ENCODE measurements at regions of chr1 and their contacts with region 1.

Region 1: GRCh38 chr1:202713110-202713509 is 2.9 kb upstream of the SYT2 start:
- DNase-seq: no peak
- ATAC-seq: no peak
- H3K4me3 ChIP-seq: no peak overlapping the region
- H3K4me3 Mint-ChIP-seq: no peak overlapping the region
- H3K27ac ChIP-seq: no peak overlapping the region
- H3K27ac Mint-ChIP-seq: no peak overlapping the region
- H3K4me1 ChIP-seq: peaks cover 9 to 14% of the 10 kb centered on the region in 2 donors
- H3K4me1 Mint-ChIP-seq: peaks cover 8% of the 10 kb centered on the region
- H3K27me3 ChIP-seq: peaks cover 0 to 58% (median 17%) of the 10 kb centered on the region in 4 experiments
- H3K27me3 Mint-ChIP-seq: peaks cover 56% of the 10 kb centered on the region
- CTCF ChIP-seq: no peak

Region 2: GRCh38 chr1:202009326-202010179 is 703.6 kb before region 1 on chr1:
- CTCF ChIA-PET with region 1: no interaction called
- POLR2A ChIA-PET with region 1: no interaction called
- intact Hi-C with region 1: loop called (anchors 5 kb)
- DNase-seq: peak; percentile 67
- ATAC-seq: peak; percentile 60
- H3K4me3 ChIP-seq: no peak overlapping the region
- H3K4me3 Mint-ChIP-seq: no peak overlapping the region
- H3K27ac ChIP-seq: no peak overlapping the region
- H3K27ac Mint-ChIP-seq: no peak overlapping the region
- H3K4me1 ChIP-seq: peaks cover 0 to 7% of the 10 kb centered on the region in 2 donors
- H3K4me1 Mint-ChIP-seq: peaks cover 2% of the 10 kb centered on the region
- H3K27me3 ChIP-seq: no peaks in the 10 kb centered on the region
- H3K27me3 Mint-ChIP-seq: no peaks in the 10 kb centered on the region
- CTCF ChIP-seq: peak; percentile 94

Region 3: DNA sequence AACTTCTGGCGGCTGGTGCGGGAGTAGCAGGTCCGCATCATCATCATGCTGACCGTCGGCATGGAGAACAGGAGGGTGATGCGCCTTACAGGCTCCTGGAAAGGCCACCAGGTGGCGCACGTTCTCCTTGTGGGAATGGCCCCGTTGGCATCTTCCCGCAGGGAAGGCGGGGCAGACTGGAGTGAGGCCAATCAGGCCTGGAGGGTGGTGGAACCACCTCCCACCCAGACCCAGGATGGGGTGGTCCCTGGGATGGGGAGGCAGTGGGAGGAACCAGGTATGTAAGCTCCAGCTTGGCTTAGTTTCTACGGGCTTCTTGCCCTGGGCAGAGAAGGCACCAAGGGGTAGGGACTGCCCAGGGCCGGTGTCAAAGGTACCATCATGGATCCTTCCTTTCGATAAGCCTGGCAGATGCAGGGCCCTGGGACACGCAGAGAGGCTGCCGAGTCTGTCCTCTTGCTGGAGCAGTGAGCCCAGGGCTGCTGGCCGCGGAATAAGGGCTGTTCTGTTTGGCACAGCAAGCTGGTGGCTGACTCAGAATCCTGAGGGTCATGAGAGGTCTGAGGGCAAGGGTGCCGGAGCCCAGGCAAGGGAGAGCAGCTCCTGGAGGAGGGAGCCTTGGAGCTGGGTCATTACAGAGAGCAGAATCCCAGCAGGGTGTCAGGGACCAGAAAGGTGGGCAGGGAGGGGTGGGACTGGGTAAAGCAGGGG is 528.2 kb before region 1 on chr1:
- CTCF ChIA-PET with region 1: interaction called, 41 read pairs
- POLR2A ChIA-PET with region 1: no interaction called
- intact Hi-C with region 1: no loop called
- DNase-seq: peak; percentile 71
- ATAC-seq: peak; percentile 50
- H3K4me3 ChIP-seq: no peak overlapping the region
- H3K4me3 Mint-ChIP-seq: no peak overlapping the region
- H3K27ac ChIP-seq: no peak overlapping the region
- H3K27ac Mint-ChIP-seq: no peak overlapping the region
- H3K4me1 ChIP-seq: peaks cover 5 to 6% of the 10 kb centered on the region in 2 donors
- H3K4me1 Mint-ChIP-seq: peaks cover 9% of the 10 kb centered on the region
- H3K27me3 ChIP-seq: peaks cover 0 to 31% (median 5%) of the 10 kb centered on the region in 4 experiments
- H3K27me3 Mint-ChIP-seq: peaks cover 46% of the 10 kb centered on the region
- CTCF ChIP-seq: peak; percentile 78

Region 4: DNA sequence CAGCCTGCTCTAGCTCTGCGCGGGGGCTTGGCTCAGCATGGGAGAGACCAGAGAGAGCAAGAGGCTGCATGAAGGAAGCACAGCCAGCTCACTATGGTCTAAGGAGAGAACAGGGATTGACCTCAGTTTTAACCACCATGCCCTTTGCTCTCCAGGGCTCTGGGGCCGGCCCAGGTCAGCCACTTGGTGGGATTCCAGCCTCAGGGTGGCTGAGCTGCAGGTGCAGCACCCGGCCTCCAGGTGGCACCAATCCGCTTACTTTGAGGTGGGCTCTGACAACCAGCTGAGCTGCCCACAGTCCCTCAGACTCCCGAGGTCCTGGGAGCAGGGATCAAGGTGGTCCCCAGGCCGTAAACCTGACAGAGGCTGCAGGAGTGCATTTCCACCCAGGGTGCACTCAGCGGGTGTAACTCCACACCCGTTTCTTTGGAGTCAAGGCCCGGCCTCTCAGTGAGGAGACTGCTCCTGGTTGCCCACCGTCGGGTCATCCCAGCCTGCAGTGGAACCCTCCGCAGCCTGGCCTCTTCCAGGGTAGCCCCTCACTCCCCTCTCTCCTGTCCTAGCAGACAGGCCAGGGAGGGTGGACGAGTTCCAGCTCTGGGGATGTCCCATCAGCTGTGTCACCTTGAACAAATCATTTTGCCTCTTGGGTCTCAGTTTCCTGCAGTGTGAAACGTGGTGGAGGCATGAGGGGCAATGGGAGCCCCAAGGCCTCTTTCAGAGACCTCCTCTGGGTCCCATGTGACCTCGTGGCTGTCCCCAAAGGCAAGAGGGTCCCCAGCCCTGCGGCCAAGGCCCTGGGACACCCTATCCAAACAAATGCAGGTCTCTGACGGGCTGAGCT is 520.1 kb before region 1 on chr1:
- CTCF ChIA-PET with region 1: interaction called, 71 read pairs
- POLR2A ChIA-PET with region 1: no interaction called
- intact Hi-C with region 1: no loop called
- DNase-seq: peak; percentile 75
- ATAC-seq: peak; percentile 71
- H3K4me3 ChIP-seq: no peak overlapping the region
- H3K4me3 Mint-ChIP-seq: peak overlapping the region; percentile 58
- H3K27ac ChIP-seq: no peak overlapping the region
- H3K27ac Mint-ChIP-seq: no peak overlapping the region
- H3K4me1 ChIP-seq: peaks cover 14 to 19% of the 10 kb centered on the region in 2 donors
- H3K4me1 Mint-ChIP-seq: peaks cover 18% of the 10 kb centered on the region
- H3K27me3 ChIP-seq: peaks cover 0 to 36% (median 10%) of the 10 kb centered on the region in 4 experiments
- H3K27me3 Mint-ChIP-seq: peaks cover 54% of the 10 kb centered on the region
- CTCF ChIP-seq: peak; percentile 89

Region 5: DNA sequence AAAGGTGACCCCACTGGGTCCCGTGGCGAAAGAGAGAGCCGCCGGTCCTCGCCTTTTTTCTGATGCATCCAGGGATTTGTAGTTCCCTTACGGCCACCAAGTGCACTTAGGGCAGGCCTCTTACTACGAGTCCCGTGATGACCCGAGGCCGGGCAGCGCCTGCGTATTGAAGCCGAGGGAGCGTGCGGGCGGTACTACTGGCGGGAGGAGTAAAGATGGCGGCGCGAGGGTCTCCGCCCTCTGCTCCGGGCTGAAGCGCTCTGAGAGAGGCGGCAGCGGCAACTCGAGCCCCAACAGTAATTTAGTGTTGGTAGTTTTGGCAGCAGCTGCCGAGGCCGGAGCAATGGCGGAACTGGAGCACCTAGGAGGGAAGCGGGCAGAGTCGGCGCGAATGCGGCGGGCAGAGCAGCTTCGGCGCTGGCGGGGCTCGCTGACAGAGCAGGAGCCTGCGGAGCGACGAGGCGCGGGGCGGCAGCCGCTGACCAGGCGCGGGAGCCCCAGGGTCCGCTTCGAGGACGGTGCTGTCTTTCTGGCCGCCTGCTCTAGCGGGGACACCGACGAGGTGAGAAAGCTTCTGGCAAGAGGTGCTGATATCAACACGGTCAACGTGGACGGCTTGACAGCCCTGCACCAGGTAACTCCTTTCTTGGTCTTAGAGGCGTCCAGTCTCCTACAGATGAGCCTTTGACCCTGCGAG is 364.5 kb before region 1 on chr1 and contains the start of gene PPP1R12B:
- CTCF ChIA-PET with region 1: interaction called, 44 read pairs
- POLR2A ChIA-PET with region 1: no interaction called
- intact Hi-C with region 1: no loop called
- DNase-seq: peak; percentile 97
- ATAC-seq: peak; percentile 94
- H3K4me3 ChIP-seq: peak within 1 kb of the TSS; percentile 74 to 97 (median 89)
- H3K4me3 Mint-ChIP-seq: peak within 1 kb of the TSS; percentile 91
- H3K27ac ChIP-seq: peak within 1 kb of the TSS; percentile 3 to 79
- H3K27ac Mint-ChIP-seq: peak within 1 kb of the TSS; percentile 90
- H3K4me1 ChIP-seq: peaks cover 11 to 12% of the 10 kb centered on the region in 2 donors
- H3K4me1 Mint-ChIP-seq: peaks cover 29% of the 10 kb centered on the region
- H3K27me3 ChIP-seq: no peaks in the 10 kb centered on the region
- H3K27me3 Mint-ChIP-seq: no peaks in the 10 kb centered on the region
- CTCF ChIP-seq: no peak
- total RNA-seq, gene PPP1R12B: 36.8 and 49.6 TPM in 2 replicates

Region 6: DNA sequence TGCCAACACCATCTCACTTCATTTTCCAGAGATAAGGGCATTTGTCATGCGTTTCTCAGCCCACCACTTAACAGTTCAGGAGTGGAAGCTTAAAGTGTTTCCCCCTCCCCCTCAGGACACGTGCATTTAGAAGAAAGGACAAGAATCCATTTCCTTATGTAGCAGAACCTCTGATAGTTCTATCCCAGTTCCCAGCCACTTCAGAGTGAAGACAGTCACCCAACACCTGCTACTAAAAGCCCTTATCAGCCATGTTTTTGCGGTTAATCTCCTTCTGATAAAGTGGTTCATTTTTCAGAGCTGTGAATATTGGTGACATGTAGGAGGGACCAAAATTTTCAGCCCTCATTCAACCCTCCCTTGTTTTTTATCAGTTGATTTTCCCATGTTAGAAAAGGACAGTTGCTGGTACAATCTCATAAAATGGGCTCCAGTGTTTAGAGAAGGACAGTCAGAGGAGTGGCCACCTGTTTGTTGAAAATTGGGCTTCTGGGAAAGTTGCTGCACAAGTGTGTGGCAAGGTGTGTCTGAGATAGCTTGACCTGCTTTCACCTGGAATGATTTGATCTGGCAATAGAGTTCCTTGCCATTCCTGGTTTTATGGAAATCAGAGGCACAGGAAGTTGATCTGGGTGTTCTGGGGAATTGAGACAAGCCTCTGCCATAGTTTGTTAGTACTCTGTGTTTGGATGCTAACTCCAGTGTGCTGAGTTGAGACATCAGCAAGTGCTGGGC is 250.6 kb before region 1 on chr1:
- CTCF ChIA-PET with region 1: interaction called, 90 read pairs
- POLR2A ChIA-PET with region 1: no interaction called
- intact Hi-C with region 1: no loop called
- DNase-seq: no peak
- ATAC-seq: no peak
- H3K4me3 ChIP-seq: no peak overlapping the region
- H3K4me3 Mint-ChIP-seq: no peak overlapping the region
- H3K27ac ChIP-seq: no peak overlapping the region
- H3K27ac Mint-ChIP-seq: no peak overlapping the region
- H3K4me1 ChIP-seq: no peaks in the 10 kb centered on the region
- H3K4me1 Mint-ChIP-seq: no peaks in the 10 kb centered on the region
- H3K27me3 ChIP-seq: no peaks in the 10 kb centered on the region
- H3K27me3 Mint-ChIP-seq: no peaks in the 10 kb centered on the region
- CTCF ChIP-seq: no peak

Region 7: GRCh38 chr1:202501281-202501680 is 211.8 kb before region 1 on chr1:
- CTCF ChIA-PET with region 1: interaction called, 25 read pairs
- POLR2A ChIA-PET with region 1: no interaction called
- intact Hi-C with region 1: no loop called
- DNase-seq: peak; percentile 31
- ATAC-seq: no peak
- H3K4me3 ChIP-seq: no peak overlapping the region
- H3K4me3 Mint-ChIP-seq: no peak overlapping the region
- H3K27ac ChIP-seq: no peak overlapping the region
- H3K27ac Mint-ChIP-seq: no peak overlapping the region
- H3K4me1 ChIP-seq: no peaks in the 10 kb centered on the region
- H3K4me1 Mint-ChIP-seq: no peaks in the 10 kb centered on the region
- H3K27me3 ChIP-seq: no peaks in the 10 kb centered on the region
- H3K27me3 Mint-ChIP-seq: no peaks in the 10 kb centered on the region
- CTCF ChIP-seq: no peak

Measured in B cell (primary cell).